ENCODE measurements at regions of chr6 and their contacts with region 1.

Region 1: GRCh38 chr6:42166444-42167141 is 6.6 kb upstream of the GUCA1A start:
- DNase-seq: peak; percentile 78
- ATAC-seq: peak; percentile 88
- H3K4me3 ChIP-seq: no peak overlapping the region
- H3K27ac ChIP-seq: peak overlapping the region; percentile 68
- H3K4me1 ChIP-seq: peaks cover 9% of the 10 kb centered on the region
- H3K27me3 ChIP-seq: no peaks in the 10 kb centered on the region
- CTCF ChIP-seq: peak; percentile 97

Region 2: DNA sequence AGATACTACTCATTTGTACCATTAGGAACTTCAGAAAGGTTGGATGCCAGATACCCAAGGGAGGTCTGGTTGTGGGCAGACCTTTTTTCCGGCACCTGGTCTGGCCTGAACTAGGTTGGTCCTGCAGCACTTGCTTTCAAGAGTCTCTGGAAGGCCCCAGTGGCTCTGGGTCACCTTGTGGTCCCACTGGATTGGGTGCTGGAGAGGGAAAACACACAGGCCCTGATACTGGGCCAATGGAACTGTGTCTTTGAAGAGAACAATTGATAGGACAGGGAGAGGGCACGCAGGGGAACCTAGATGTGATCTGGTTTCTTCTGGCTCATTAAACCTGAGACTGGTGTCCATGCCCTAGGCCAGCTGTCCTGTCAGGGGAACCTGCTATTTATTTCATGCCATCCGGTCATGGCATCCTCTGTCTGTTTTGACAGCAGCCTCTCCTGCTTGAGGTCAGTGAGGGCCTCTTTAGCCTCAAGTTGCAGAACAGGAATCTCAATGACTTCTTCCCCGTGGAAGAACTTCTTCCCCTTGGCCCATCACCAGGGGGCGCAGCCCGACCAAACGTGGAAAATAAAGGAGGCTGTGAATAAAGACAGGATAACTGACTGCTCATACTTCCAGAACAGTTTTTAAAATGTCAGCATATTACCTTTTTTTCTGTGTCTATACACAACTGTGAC is 91.3 kb before region 1 on chr6:
- CTCF ChIA-PET with region 1: no interaction called
- POLR2A ChIA-PET with region 1: no interaction called
- in situ Hi-C with region 1: no loop called
- intact Hi-C with region 1: loop called (anchors 1 kb)
- DNase-seq: peak; percentile 51
- ATAC-seq: peak; percentile 86
- H3K4me3 ChIP-seq: no peak overlapping the region
- H3K27ac ChIP-seq: no peak overlapping the region
- H3K4me1 ChIP-seq: no peaks in the 10 kb centered on the region
- H3K27me3 ChIP-seq: no peaks in the 10 kb centered on the region
- CTCF ChIP-seq: peak; percentile 90

Region 3: GRCh38 chr6:42197555-42198362 is 31.2 kb after region 1 on chr6:
- CTCF ChIA-PET with region 1: interaction called, 10 read pairs
- POLR2A ChIA-PET with region 1: no interaction called
- in situ Hi-C with region 1: no loop called
- intact Hi-C with region 1: no loop called
- DNase-seq: no peak
- ATAC-seq: peak; percentile 57; the same call in 1 of the 2 replicates
- H3K4me3 ChIP-seq: no peak overlapping the region
- H3K27ac ChIP-seq: no peak overlapping the region
- H3K4me1 ChIP-seq: peaks cover 9% of the 10 kb centered on the region; the same call in 1 of the 2 replicates
- H3K27me3 ChIP-seq: no peaks in the 10 kb centered on the region
- CTCF ChIP-seq: no peak